Activated CD4-positive, alpha-beta memory T cell treated with anti-CD3 and anti-CD28 coated beads, Interleukin-2, amount 10 ng/mL, durations not matched to agents 7 days and 5 days (primary cell): ENCODE measurements at regions of chr12 and their contacts with region 1.

Region 1: DNA sequence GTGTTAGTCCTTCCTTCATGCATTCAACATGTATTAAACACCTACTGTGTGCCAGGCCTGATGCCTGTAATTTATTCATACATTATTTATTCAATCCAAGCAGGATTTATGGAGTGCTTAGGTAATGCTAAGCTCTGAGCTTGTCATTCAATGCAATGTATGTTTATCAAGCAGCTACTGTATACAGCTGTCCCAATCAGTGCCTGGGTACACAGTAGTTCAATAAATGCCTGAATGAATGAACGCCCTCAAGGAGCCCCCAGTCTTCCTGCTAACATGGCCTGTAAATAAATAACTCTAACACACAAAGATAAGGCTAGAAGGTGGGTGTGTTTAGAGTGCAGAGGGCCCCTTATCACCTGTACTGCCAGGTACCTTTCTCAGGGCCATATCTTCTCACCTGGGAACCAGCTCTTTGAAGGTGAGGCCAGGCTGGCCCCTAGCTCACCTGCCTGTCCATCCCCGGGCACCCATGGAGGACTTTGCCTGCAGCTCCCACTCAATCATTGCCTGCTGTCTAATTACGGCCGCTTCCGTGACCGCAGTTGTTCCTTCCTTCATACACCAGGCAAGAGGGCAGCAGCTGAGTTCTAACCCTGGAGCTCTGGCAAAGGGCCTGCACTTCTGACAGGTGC is 20.0 kb upstream of the KDM2B start:
- DNase-seq: no peak
- H3K4me3 Mint-ChIP-seq: no peak overlapping the region
- H3K27ac Mint-ChIP-seq: no peak overlapping the region
- H3K4me1 Mint-ChIP-seq: peaks cover 3% of the 10 kb centered on the region
- H3K27me3 Mint-ChIP-seq: peaks cover 1% of the 10 kb centered on the region

Region 2: DNA sequence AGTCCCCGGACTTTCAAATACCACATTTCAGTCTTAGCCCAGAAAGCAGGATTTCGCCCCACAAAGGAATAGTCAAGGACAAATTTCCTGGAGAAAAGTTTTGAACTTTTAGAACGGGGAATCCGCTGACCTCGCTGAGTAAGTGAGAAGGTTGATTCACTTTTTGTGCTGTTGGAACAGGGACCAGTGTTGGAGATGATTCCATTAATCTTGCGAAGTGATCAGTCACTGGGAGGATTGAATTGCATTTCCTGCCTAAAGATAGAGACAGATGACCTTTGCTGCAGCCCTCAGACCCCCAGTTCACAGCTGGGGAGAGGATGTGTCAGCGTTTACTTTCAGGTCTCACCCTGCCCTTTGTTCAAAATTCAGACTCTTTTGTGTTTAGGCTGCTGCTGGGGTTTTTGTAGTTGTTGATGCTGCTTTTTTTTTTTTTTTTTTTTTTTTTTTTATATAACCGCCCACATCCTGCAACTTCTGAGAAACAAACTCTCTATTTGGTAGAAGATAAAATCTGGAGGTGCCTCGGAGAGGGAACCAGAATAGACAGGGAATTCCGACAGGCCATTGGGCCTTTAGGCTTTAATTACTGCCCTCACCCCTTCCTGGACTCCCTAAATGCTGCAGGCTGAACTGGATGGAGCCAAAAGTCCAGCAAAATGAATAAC is 10.2 kb before region 1 on chr12:
- CTCF ChIA-PET with region 1: interaction called, 5 read pairs
- POLR2A ChIA-PET with region 1: interaction called, 11 read pairs
- DNase-seq: peak; percentile 66
- H3K4me3 Mint-ChIP-seq: peak overlapping the region; percentile 72
- H3K27ac Mint-ChIP-seq: peak overlapping the region; percentile 100
- H3K4me1 Mint-ChIP-seq: peaks cover 33% of the 10 kb centered on the region
- H3K27me3 Mint-ChIP-seq: no peaks in the 10 kb centered on the region

Region 3: GRCh38 chr12:121786441-121786825 is 185.6 kb after region 1 on chr12:
- CTCF ChIA-PET with region 1: no interaction called
- POLR2A ChIA-PET with region 1: no interaction called
- DNase-seq: peak; percentile 58
- H3K4me3 Mint-ChIP-seq: peak overlapping the region; percentile 92
- H3K27ac Mint-ChIP-seq: peak overlapping the region; percentile 99
- H3K4me1 Mint-ChIP-seq: peaks cover 92% of the 10 kb centered on the region
- H3K27me3 Mint-ChIP-seq: no peaks in the 10 kb centered on the region